T-cell (primary cell): ENCODE measurements at regions of chr1 and their contacts with region 1.

Region 1: GRCh38 chr1:244207042-244207934 is 156.2 kb downstream of the ZBTB18 start:
- DNase-seq: no peak
- ATAC-seq: no peak
- H3K4me3 ChIP-seq: no peak overlapping the region
- H3K4me3 Mint-ChIP-seq: no peak overlapping the region
- H3K27ac ChIP-seq: no peak overlapping the region
- H3K27ac Mint-ChIP-seq: no peak overlapping the region
- H3K4me1 ChIP-seq: no peaks in the 10 kb centered on the region
- H3K4me1 Mint-ChIP-seq: peaks cover 0 to 1% (median 0%) of the 10 kb centered on the region in 3 donors
- H3K27me3 ChIP-seq: peaks cover 0 to 3% of the 10 kb centered on the region in 2 experiments
- H3K27me3 Mint-ChIP-seq: peaks cover 0 to 5% of the 10 kb centered on the region in 2 donors

Region 2: GRCh38 chr1:243733670-243734307 is 473.5 kb before region 1 on chr1:
- CTCF ChIA-PET with region 1: interaction called in 1 of 2 experiments, 12 read pairs
- POLR2A ChIA-PET with region 1: no interaction called
- DNase-seq: no peak
- ATAC-seq: no peak
- H3K4me3 ChIP-seq: no peak overlapping the region
- H3K4me3 Mint-ChIP-seq: no peak overlapping the region
- H3K27ac ChIP-seq: no peak overlapping the region
- H3K27ac Mint-ChIP-seq: no peak overlapping the region
- H3K4me1 ChIP-seq: no peaks in the 10 kb centered on the region
- H3K4me1 Mint-ChIP-seq: peaks cover 46 to 57% (median 52%) of the 10 kb centered on the region in 3 donors
- H3K27me3 ChIP-seq: no peaks in the 10 kb centered on the region
- H3K27me3 Mint-ChIP-seq: no peaks in the 10 kb centered on the region

Region 3: GRCh38 chr1:243740255-243740999 is 466.9 kb before region 1 on chr1:
- CTCF ChIA-PET with region 1: no interaction called
- POLR2A ChIA-PET with region 1: interaction called in 1 of 2 experiments, 11 read pairs
- DNase-seq: no peak
- ATAC-seq: no peak
- H3K4me3 ChIP-seq: no peak overlapping the region
- H3K4me3 Mint-ChIP-seq: no peak overlapping the region
- H3K27ac ChIP-seq: no peak overlapping the region
- H3K27ac Mint-ChIP-seq: no peak overlapping the region
- H3K4me1 ChIP-seq: no peaks in the 10 kb centered on the region
- H3K4me1 Mint-ChIP-seq: peaks cover 35 to 57% (median 51%) of the 10 kb centered on the region in 3 donors
- H3K27me3 ChIP-seq: no peaks in the 10 kb centered on the region
- H3K27me3 Mint-ChIP-seq: no peaks in the 10 kb centered on the region

Region 4: DNA sequence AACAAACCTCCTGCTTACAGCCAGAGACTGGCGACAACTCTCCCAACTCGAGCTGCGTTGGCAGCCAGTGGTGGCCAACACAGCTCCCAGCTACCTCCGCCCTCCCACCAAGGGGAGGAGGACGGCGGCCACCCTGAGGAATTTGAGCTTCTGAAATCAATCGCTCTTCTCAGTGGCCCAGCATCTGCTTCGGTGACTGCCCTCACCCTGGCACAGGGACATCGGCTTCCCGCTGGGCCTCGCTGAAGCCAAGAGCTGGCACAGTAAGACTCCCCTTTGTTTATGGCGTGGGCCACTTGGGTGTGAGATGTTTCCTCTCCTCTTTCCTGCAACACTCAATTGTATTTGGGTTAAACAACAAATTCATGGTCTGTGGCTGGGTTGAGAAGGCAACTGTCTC is 20.0 kb before region 1 on chr1:
- CTCF ChIA-PET with region 1: no interaction called
- POLR2A ChIA-PET with region 1: no interaction called
- DNase-seq: no peak
- ATAC-seq: no peak
- H3K4me3 ChIP-seq: no peak overlapping the region
- H3K4me3 Mint-ChIP-seq: no peak overlapping the region
- H3K27ac ChIP-seq: no peak overlapping the region
- H3K27ac Mint-ChIP-seq: no peak overlapping the region
- H3K4me1 ChIP-seq: no peaks in the 10 kb centered on the region
- H3K4me1 Mint-ChIP-seq: no peaks in the 10 kb centered on the region
- H3K27me3 ChIP-seq: peaks cover 0 to 7% of the 10 kb centered on the region in 2 experiments
- H3K27me3 Mint-ChIP-seq: peaks cover 0 to 1% of the 10 kb centered on the region in 2 donors

Region 5: GRCh38 chr1:244224487-244225430 is 17.5 kb after region 1 on chr1:
- CTCF ChIA-PET with region 1: no interaction called
- POLR2A ChIA-PET with region 1: interaction called, 3 to 11 read pairs
- DNase-seq: peak in 3 of 35 experiments; percentile 7 to 31 (median 11)
- ATAC-seq: no peak
- H3K4me3 ChIP-seq: no peak overlapping the region
- H3K4me3 Mint-ChIP-seq: no peak overlapping the region
- H3K27ac ChIP-seq: no peak overlapping the region
- H3K27ac Mint-ChIP-seq: no peak overlapping the region
- H3K4me1 ChIP-seq: no peaks in the 10 kb centered on the region
- H3K4me1 Mint-ChIP-seq: no peaks in the 10 kb centered on the region
- H3K27me3 ChIP-seq: peaks cover 0 to 8% of the 10 kb centered on the region in 2 experiments
- H3K27me3 Mint-ChIP-seq: peaks cover 9 to 19% of the 10 kb centered on the region in 2 donors

Region 6: GRCh38 chr1:244256086-244256676 is 48.9 kb after region 1 on chr1:
- CTCF ChIA-PET with region 1: no interaction called
- POLR2A ChIA-PET with region 1: no interaction called
- DNase-seq: no peak
- ATAC-seq: no peak
- H3K4me3 ChIP-seq: no peak overlapping the region
- H3K4me3 Mint-ChIP-seq: no peak overlapping the region
- H3K27ac ChIP-seq: no peak overlapping the region
- H3K27ac Mint-ChIP-seq: no peak overlapping the region
- H3K4me1 ChIP-seq: peaks cover 0 to 2% of the 10 kb centered on the region in 2 experiments
- H3K4me1 Mint-ChIP-seq: peaks cover 0 to 3% (median 0%) of the 10 kb centered on the region in 3 donors
- H3K27me3 ChIP-seq: peaks cover 0 to 5% of the 10 kb centered on the region in 2 experiments
- H3K27me3 Mint-ChIP-seq: peaks cover 0 to 2% of the 10 kb centered on the region in 2 donors